ENCODE measurements at regions of chr7 and their contacts with region 1.

Region 1: DNA sequence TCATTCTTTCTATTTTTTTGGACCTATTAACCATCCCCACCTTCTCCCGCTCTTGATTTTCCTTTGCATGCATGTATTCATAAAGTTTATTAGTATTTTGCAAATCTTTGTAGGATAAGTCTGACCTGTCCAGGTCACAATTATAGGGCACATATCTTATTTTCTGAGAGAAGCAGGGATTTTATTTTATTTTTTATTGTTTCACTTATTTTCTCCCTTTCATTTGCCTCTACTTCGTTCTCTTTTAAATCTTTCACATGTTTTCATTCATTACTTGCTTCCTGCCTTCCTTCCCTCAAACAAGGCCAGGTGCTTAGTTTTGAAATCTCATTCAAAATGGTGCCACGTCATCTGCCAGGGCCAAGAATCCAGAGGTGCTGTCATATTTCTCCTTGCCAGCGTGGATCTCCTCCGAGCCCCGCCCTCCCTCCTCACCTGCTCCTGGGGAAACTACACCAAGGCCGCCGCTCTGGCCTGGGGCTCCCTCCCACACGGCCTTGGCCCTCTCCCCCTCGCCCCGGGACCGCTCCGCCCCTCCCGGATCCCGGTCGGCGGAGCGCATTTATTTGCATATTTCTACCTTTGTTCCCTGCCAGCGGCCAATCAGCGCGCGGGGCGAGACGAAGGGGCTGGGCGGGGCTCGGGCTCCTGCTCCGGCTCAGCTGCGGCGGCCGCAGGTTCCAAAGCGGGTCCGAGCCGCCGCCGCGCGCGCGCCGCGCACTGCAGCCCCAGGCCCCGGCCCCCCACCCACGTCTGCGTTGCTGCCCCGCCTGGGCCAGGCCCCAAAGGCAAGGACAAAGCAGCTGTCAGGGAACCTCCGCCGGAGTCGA is at the start of gene TSPAN13:
- DNase-seq: peak; percentile 79
- H3K4me3 ChIP-seq: peak within 1 kb of the TSS; percentile 64 to 94 (median 81)
- H3K27ac ChIP-seq: peak within 1 kb of the TSS; percentile 42
- H3K4me1 ChIP-seq: peaks cover 12% of the 10 kb centered on the region
- H3K27me3 ChIP-seq: no peaks in the 10 kb centered on the region
- CTCF ChIP-seq: no peak
- POLR2A ChIP-seq: no peak
- total RNA-seq, gene TSPAN13: 33.0 and 42.2 TPM in 2 replicates

Region 2: DNA sequence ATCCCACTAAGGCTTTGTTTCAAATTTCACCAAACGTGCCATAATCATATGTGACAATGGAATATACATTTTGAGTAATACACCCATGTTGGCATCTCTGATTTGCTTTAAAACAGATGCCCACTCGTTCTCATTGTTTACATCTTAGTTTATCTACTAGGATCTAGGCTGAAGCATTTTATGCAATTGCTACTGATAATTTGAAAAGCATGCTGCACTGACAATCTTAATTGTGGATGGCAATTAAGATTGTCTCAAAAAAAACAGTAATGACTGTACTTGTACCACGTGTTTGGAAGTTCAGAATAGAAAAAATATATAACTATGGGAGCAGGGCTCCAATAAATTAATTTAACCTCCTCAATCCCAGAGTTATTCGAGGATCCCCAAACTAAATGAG is 468.7 kb before region 1 on chr7:
- CTCF ChIA-PET with region 1: no interaction called
- POLR2A ChIA-PET with region 1: no interaction called
- dilution Hi-C with region 1: no loop called
- intact Hi-C with region 1: no loop called
- DNase-seq: no peak
- H3K4me3 ChIP-seq: no peak overlapping the region
- H3K27ac ChIP-seq: no peak overlapping the region
- H3K4me1 ChIP-seq: no peaks in the 10 kb centered on the region
- H3K27me3 ChIP-seq: no peaks in the 10 kb centered on the region
- CTCF ChIP-seq: no peak
- POLR2A ChIP-seq: no peak

Region 3: GRCh38 chr7:16645593-16646471 is 107.5 kb before region 1 on chr7 and contains the starts of genes ANKMY2 and BZW2:
- CTCF ChIA-PET with region 1: no interaction called
- POLR2A ChIA-PET with region 1: no interaction called
- dilution Hi-C with region 1: no loop called
- intact Hi-C with region 1: loop called (anchors 5 kb)
- DNase-seq: peak; percentile 97
- H3K4me3 ChIP-seq: peak within 1 kb of the TSS; percentile 74 to 98 (median 98)
- H3K27ac ChIP-seq: peak within 1 kb of the TSS; percentile 91
- H3K4me1 ChIP-seq: peaks cover 46% of the 10 kb centered on the region
- H3K27me3 ChIP-seq: no peaks in the 10 kb centered on the region
- CTCF ChIP-seq: no peak
- POLR2A ChIP-seq: peak; percentile 96
- total RNA-seq, gene ANKMY2: 9.8 and 11.6 TPM in 2 replicates
- total RNA-seq, gene BZW2: 95.3 and 106 TPM in 2 replicates

Region 4: GRCh38 chr7:16695621-16696237 is 57.6 kb before region 1 on chr7:
- CTCF ChIA-PET with region 1: interaction called, 3 read pairs
- POLR2A ChIA-PET with region 1: no interaction called
- dilution Hi-C with region 1: no loop called
- intact Hi-C with region 1: loop called (anchors 1 kb)
- DNase-seq: peak; percentile 74
- H3K4me3 ChIP-seq: no peak overlapping the region
- H3K27ac ChIP-seq: no peak overlapping the region
- H3K4me1 ChIP-seq: peaks cover 7% of the 10 kb centered on the region
- H3K27me3 ChIP-seq: no peaks in the 10 kb centered on the region
- CTCF ChIP-seq: peak; percentile 44 to 54
- POLR2A ChIP-seq: no peak

Region 5: DNA sequence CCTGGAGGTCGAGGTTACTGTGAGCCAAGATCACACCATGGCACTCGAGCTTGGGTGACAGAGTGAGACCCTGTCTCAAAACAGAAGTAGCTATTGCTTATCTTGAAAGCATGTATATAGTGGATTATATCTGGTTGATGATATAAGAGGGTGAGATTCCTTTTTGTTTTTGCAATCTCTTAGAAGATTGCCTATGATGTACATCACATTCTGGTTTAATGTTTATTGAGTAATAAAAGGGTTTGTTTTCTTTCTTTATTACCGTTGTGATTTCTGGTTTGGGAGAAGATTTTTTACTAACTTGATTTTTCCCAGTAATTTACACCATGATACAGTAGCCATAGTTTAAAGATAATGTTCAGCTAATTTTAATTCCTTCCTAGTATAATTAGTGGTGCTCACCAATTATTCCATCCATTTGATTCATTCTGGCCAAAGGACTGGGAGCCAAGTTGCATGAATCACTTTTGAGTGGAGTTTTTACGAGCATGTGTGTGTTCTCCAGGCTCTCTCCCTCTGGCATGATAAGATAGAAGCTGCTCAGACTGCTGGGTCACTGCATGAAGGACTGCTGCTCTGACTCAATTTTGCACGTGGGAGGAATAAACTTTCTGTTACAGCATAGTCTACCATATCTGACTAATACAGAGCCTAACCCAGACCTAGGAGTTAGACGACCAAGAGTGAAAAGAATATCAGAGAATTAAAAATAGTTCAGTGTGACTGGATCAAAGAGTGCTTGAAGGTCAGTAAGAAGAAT is 13.3 kb before region 1 on chr7:
- CTCF ChIA-PET with region 1: interaction called, 7 read pairs
- POLR2A ChIA-PET with region 1: no interaction called
- dilution Hi-C with region 1: no loop called
- intact Hi-C with region 1: loop called (anchors 1 kb)
- DNase-seq: peak; percentile 88
- H3K4me3 ChIP-seq: no peak overlapping the region
- H3K27ac ChIP-seq: peak overlapping the region; percentile 40
- H3K4me1 ChIP-seq: peaks cover 36% of the 10 kb centered on the region
- H3K27me3 ChIP-seq: no peaks in the 10 kb centered on the region
- CTCF ChIP-seq: no peak
- POLR2A ChIP-seq: no peak

Measured in endothelial cell of umbilical vein (primary cell).